B cell (primary cell): ENCODE measurements at regions of chr4 and their contacts with region 1.

Region 1: GRCh38 chr4:56907489-56908205 is at the start of gene REST:
- DNase-seq: peak; percentile 92
- ATAC-seq: peak; percentile 65
- H3K4me3 ChIP-seq: peak within 1 kb of the TSS; percentile 62 to 98 (median 88)
- H3K4me3 Mint-ChIP-seq: peak within 1 kb of the TSS; percentile 93
- H3K27ac ChIP-seq: peak within 1 kb of the TSS; percentile 47 to 77
- H3K27ac Mint-ChIP-seq: peak within 1 kb of the TSS; percentile 92
- H3K4me1 ChIP-seq: peaks cover 29 to 35% of the 10 kb centered on the region in 2 donors
- H3K4me1 Mint-ChIP-seq: peaks cover 42% of the 10 kb centered on the region
- H3K27me3 ChIP-seq: no peaks in the 10 kb centered on the region
- H3K27me3 Mint-ChIP-seq: peaks cover 3% of the 10 kb centered on the region
- CTCF ChIP-seq: no peak
- total RNA-seq, gene REST: 59.4 and 61.1 TPM in 2 replicates

Region 2: DNA sequence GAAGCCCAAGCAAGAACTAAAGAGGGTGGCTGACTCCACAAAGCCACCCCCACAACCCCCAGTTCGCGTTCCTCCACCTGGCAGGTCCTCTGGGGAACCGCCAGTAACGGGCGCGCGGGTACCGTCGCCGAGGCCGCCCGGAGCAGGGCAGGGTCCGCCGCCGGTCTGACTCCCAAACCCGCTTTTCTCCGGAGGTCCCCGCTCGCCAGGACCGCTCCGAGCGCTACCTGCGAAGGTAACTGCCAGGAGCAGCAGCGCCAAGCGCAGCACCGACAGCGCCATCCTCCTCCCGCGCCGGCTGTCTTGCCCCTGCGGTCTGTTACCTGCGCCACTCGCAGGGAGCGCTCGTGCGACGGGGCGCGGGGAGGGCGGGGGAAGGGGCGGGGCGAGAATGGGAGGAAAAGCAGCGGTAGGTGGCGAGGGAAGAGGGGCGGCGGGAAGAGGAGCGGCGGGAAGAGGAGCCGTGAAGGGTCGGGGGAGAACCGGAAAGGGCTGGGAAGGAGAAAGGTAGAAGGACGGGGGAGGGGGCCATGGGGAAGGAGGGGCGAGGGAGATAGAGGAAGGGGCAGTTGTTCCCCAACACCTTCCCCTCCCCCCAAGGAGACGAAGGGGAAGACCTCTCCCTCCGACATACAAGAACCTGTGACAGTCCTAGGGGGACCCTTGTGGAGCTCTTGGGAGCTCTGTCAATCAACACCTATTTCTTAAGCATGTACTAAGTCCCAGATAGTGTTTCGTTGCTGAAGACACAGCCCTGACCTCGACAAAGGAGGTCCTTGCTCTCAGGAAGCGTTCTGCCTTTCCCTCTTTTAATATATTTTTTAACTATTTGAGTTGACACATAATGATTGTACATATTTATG is 86.0 kb before region 1 on chr4 and contains the start of gene SPINK2:
- CTCF ChIA-PET with region 1: no interaction called
- POLR2A ChIA-PET with region 1: no interaction called
- intact Hi-C with region 1: loop called (anchors 1 kb)
- DNase-seq: peak; percentile 82
- ATAC-seq: peak; percentile 90
- H3K4me3 ChIP-seq: peak within 1 kb of the TSS; percentile 36 to 66 (median 62)
- H3K4me3 Mint-ChIP-seq: peak within 1 kb of the TSS; percentile 83
- H3K27ac ChIP-seq: no peak within 1 kb of the TSS
- H3K27ac Mint-ChIP-seq: peak within 1 kb of the TSS; percentile 8
- H3K4me1 ChIP-seq: peaks cover 26 to 32% of the 10 kb centered on the region in 2 donors
- H3K4me1 Mint-ChIP-seq: peaks cover 35% of the 10 kb centered on the region
- H3K27me3 ChIP-seq: peaks cover 0 to 18% (median 4%) of the 10 kb centered on the region in 4 experiments
- H3K27me3 Mint-ChIP-seq: peaks cover 4% of the 10 kb centered on the region
- CTCF ChIP-seq: peak; percentile 37
- total RNA-seq, gene SPINK2: 0.63 and 0.94 TPM in 2 replicates

Region 3: DNA sequence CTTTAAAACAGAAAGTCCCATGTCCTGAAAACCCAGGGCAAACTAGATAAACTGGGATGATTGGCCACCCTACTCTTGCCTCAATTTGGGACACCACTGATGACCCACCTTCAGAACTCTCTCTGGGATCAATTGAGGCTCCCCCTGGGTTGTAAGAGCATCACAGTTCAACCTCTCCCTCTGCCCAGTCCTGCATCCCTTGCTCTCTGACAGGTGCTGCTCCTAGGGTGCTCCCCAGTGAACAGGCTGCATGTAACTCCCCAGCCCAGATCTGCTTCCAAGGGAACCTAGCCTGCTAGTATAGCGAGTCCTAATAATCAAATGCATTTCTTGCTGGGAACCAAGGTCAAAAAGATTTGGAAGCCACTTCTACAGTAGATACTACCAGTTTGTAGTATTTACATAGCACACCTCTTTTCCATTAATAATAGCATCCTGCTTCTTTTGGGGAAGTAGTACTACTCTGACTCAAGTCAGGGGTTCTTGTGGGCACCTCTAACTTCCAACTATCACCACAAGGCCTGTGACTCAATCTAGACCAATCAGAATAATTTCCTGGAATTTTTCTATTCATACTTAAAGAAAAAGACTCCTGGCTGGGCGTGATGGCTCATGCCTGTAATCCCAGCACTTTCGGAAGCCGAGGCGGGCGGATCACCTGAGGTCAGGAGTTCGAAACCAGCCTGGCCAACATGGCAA is 44.1 kb before region 1 on chr4:
- CTCF ChIA-PET with region 1: no interaction called
- POLR2A ChIA-PET with region 1: no interaction called
- intact Hi-C with region 1: no loop called
- DNase-seq: no peak
- ATAC-seq: no peak
- H3K4me3 ChIP-seq: no peak overlapping the region
- H3K4me3 Mint-ChIP-seq: no peak overlapping the region
- H3K27ac ChIP-seq: no peak overlapping the region
- H3K27ac Mint-ChIP-seq: no peak overlapping the region
- H3K4me1 ChIP-seq: no peaks in the 10 kb centered on the region
- H3K4me1 Mint-ChIP-seq: peaks cover 7% of the 10 kb centered on the region
- H3K27me3 ChIP-seq: no peaks in the 10 kb centered on the region
- H3K27me3 Mint-ChIP-seq: no peaks in the 10 kb centered on the region
- CTCF ChIP-seq: no peak